ENCODE measurements at regions of chr15 and their contacts with region 1.

Region 1: DNA sequence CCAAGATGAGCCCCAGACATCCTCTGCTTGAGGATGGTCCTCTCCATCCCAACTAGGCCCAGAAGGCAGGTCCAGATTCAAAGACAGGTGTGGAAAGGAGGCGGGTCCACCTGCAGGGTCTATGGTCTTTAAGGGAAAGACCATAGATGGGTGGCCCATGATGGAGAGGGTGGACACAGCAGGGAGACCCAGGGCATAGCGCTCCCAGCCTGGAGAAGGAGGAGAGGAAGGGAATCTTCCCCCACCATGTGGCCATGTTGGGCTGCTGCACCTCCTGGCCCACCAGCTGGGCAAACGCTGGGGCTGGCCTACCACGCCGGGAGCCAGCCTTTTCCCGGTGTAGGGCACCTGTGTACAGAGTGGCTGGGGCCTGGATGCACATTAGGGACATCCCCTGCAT is 265.2 kb upstream of the TLE3 start:
- DNase-seq: peak in 2 of 3 donors; percentile 71 to 74
- ATAC-seq: peak; percentile 77 to 82
- H3K4me3 ChIP-seq: no peak overlapping the region
- H3K27ac ChIP-seq: no peak overlapping the region
- H3K4me1 ChIP-seq: no peaks in the 10 kb centered on the region
- H3K27me3 ChIP-seq: no peaks in the 10 kb centered on the region

Region 2: DNA sequence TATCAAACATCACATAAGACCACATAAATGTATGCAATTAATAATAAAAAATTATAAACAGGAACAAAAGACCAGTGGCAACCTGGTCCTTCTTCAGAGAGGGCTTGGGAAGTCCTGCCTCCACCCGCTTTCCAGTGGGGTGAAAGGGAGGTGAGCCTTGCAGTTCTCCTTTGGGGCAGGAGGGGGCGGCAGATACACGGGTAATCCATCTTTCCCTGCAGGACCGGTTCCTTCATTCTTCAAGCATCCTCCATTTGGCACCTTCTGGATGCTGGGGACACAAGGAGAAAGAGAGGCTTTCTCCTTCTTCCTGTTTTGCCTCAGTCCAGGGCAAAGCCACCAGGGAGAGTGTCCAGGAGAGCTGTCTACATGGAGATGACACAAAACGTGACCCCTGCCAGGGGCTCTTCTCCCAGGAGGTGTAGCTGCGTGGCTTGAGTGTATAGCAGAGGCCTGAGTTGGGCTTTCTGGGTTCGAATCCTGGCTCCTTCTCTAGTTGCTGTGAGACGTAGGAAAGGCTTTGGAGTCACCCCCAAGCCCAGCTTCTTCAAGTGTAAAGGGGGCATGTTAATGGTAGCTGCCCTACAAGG is 887.0 kb before region 1 on chr15:
- intact Hi-C with region 1: loop called in 1 of 4 experiments (anchors 10 kb)
- DNase-seq: peak; percentile 74 to 92 (median 89)
- ATAC-seq: peak; percentile 75 to 80
- H3K4me3 ChIP-seq: no peak overlapping the region
- H3K27ac ChIP-seq: no peak overlapping the region
- H3K4me1 ChIP-seq: no peaks in the 10 kb centered on the region
- H3K27me3 ChIP-seq: no peaks in the 10 kb centered on the region

Region 3: GRCh38 chr15:69576035-69576526 is 786.8 kb before region 1 on chr15:
- intact Hi-C with region 1: loop called in 1 of 4 experiments (anchors 5 kb)
- DNase-seq: peak; percentile 43 to 77 (median 76)
- ATAC-seq: peak; percentile 73 to 76
- H3K4me3 ChIP-seq: no peak overlapping the region
- H3K27ac ChIP-seq: no peak overlapping the region
- H3K4me1 ChIP-seq: no peaks in the 10 kb centered on the region
- H3K27me3 ChIP-seq: no peaks in the 10 kb centered on the region

Region 4: GRCh38 chr15:70047386-70048197 is 315.3 kb before region 1 on chr15:
- intact Hi-C with region 1: no loop called
- DNase-seq: peak; percentile 54 to 75 (median 73)
- ATAC-seq: peak; percentile 54 to 59
- H3K4me3 ChIP-seq: no peak overlapping the region
- H3K27ac ChIP-seq: no peak overlapping the region
- H3K4me1 ChIP-seq: peaks cover 1% of the 10 kb centered on the region
- H3K27me3 ChIP-seq: no peaks in the 10 kb centered on the region

Region 5: GRCh38 chr15:70486451-70487386 is 123.8 kb after region 1 on chr15:
- intact Hi-C with region 1: no loop called
- DNase-seq: peak in 1 of 3 donors; percentile 40
- ATAC-seq: peak; percentile 29 to 54
- H3K4me3 ChIP-seq: no peak overlapping the region
- H3K27ac ChIP-seq: no peak overlapping the region
- H3K4me1 ChIP-seq: no peaks in the 10 kb centered on the region
- H3K27me3 ChIP-seq: no peaks in the 10 kb centered on the region